CD4-positive, alpha-beta T cell (primary cell): ENCODE measurements at regions of chr10 and their contacts with region 1.

Region 1: DNA sequence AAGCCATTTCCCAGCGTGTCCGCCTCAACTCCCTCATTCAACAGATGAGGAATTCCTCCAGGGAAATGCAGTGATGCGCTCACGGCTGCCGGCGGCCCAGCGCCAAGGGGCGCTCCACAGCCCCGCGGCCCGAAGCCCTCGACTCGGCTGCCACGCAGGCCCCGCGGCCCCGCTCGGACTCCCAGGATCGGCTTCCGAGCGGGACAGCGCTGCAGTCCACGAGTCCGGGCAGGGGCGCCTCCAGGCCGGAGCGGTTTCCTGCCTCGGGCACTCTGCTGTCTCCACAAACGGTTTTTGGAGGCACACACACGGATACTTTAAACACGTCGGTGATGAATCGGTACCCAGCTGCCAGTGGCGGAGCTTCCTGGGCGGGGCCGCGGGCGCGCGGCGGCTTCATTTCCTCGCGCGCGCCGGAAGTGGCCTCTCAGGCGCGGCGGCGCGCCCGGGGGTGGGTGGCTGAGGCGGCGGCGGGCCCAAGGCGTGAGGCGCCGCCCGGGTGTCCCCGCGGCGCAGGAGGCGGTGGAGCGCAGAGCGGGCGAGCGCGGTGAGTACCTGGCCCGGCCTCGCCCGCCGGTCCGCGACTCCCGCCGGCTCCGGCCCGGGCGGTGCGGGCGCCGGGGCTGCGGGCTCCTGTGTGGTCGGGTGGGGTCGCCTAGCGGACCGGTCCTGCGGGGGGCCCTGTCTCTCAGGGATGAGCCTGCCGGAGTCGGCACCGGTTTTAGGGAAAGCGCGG is at the start of gene CSGALNACT2:
- DNase-seq: peak; percentile 75 to 95 (median 86)
- ATAC-seq: peak; percentile 66
- H3K4me3 ChIP-seq: peak within 1 kb of the TSS; percentile 95
- H3K4me3 Mint-ChIP-seq: peak within 1 kb of the TSS; percentile 96
- H3K27ac ChIP-seq: peak within 1 kb of the TSS; percentile 86 to 88
- H3K27ac Mint-ChIP-seq: peak within 1 kb of the TSS; percentile 96
- H3K4me1 ChIP-seq: peaks cover 34% of the 10 kb centered on the region
- H3K4me1 Mint-ChIP-seq: peaks cover 47% of the 10 kb centered on the region
- H3K27me3 ChIP-seq: no peaks in the 10 kb centered on the region
- H3K27me3 Mint-ChIP-seq: no peaks in the 10 kb centered on the region
- CTCF ChIP-seq: no peak
- total RNA-seq, gene CSGALNACT2: 59.4 to 60.9 TPM

Region 2: DNA sequence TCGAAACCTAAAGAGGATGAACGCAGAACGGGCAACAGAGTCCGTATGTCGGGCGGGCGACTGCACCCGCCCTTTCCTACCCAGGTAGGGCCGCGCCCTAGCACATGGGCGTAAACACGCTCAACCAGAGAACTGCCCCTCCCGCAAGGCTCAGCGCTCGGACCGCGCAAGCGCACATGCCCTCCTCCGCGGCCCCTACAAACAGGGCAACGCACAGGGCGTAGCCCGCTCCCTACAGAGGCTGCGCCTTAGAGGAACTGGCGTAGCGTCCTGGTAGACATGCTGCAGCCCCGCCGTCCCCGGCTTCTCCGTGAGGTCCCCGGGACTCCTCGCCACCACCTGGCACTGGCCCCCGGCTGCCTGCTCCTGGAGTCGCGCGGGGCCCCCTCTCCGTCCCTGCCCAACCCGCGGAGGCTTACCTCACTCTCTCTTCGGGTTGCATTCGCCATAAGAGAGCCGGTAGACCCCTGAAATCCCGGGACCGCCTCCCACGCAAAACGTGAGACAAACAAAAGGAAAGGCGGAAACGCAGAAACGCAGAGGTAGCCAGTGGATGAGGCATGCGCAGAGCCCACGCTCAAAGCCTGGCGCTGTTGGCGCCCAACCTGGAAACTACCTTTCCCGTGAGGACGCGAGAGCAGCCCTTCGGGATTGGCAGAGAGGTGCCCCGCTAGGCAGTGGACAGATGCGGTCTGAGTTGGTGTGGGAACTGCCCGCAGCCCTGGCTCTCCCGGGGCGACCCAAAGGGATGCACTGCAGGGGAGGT is 500.0 kb before region 1 on chr10 and contains the start of gene ZNF33B:
- CTCF ChIA-PET with region 1: no interaction called
- POLR2A ChIA-PET with region 1: interaction called, 8 read pairs
- intact Hi-C with region 1: loop called in 1 of 2 experiments (anchors 5 kb)
- DNase-seq: peak; percentile 89 to 97 (median 94)
- ATAC-seq: peak; percentile 91
- H3K4me3 ChIP-seq: peak within 1 kb of the TSS; percentile 71
- H3K4me3 Mint-ChIP-seq: peak within 1 kb of the TSS; percentile 96
- H3K27ac ChIP-seq: peak within 1 kb of the TSS; percentile 91 to 92
- H3K27ac Mint-ChIP-seq: peak within 1 kb of the TSS; percentile 97
- H3K4me1 ChIP-seq: peaks cover 18% of the 10 kb centered on the region
- H3K4me1 Mint-ChIP-seq: peaks cover 52% of the 10 kb centered on the region
- H3K27me3 ChIP-seq: no peaks in the 10 kb centered on the region
- H3K27me3 Mint-ChIP-seq: no peaks in the 10 kb centered on the region
- CTCF ChIP-seq: no peak
- total RNA-seq, gene ZNF33B: 26.6 to 27.0 TPM

Region 3: GRCh38 chr10:43024942-43025700 is 113.1 kb before region 1 on chr10:
- CTCF ChIA-PET with region 1: no interaction called
- POLR2A ChIA-PET with region 1: no interaction called
- intact Hi-C with region 1: no loop called
- DNase-seq: no peak
- ATAC-seq: no peak
- H3K4me3 ChIP-seq: no peak overlapping the region
- H3K4me3 Mint-ChIP-seq: no peak overlapping the region
- H3K27ac ChIP-seq: no peak overlapping the region
- H3K27ac Mint-ChIP-seq: no peak overlapping the region
- H3K4me1 ChIP-seq: no peaks in the 10 kb centered on the region
- H3K4me1 Mint-ChIP-seq: no peaks in the 10 kb centered on the region
- H3K27me3 ChIP-seq: peaks cover 0 to 5% of the 10 kb centered on the region in 2 experiments
- H3K27me3 Mint-ChIP-seq: peaks cover 20% of the 10 kb centered on the region
- CTCF ChIP-seq: no peak

Region 4: DNA sequence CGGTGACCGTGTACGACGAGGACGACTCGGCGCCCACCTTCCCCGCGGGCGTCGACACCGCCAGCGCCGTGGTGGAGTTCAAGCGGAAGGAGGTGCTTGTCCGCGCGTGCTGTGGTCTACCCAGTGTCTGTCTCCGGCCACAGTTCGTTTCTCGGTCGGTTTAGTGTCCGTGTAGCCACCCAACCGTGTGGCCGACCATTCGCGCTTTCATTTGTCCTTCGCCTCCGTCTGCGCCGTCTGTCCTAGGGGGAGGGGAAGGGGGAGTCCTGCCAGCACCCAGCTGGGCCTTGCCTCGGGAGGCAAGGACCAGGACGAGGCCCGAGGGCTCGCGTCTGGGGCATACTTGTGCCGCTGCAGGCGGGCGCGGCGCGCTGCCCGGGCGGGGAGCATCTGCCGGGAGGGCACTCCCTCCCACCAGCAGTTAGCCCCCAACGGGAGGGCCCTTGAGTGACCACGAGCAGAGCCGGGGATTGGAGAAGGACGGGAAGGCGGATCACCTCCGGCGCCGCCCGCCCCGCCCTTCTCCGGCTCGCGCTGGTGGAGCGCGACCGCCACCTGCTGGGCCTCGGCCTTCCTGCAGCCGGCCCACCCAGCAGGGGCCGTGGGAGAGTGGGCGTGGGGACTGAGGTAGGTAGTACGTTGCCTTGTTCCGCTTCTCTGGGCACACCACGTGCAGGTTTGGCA is 32.9 kb before region 1 on chr10:
- CTCF ChIA-PET with region 1: interaction called, 3 read pairs
- POLR2A ChIA-PET with region 1: interaction called, 5 read pairs
- intact Hi-C with region 1: loop called in 1 of 2 experiments (anchors 2 kb)
- DNase-seq: peak; percentile 49 to 87 (median 67)
- ATAC-seq: peak; percentile 98
- H3K4me3 ChIP-seq: peak overlapping the region; percentile 62
- H3K4me3 Mint-ChIP-seq: peak overlapping the region; percentile 76
- H3K27ac ChIP-seq: no peak overlapping the region
- H3K27ac Mint-ChIP-seq: no peak overlapping the region
- H3K4me1 ChIP-seq: peaks cover 23% of the 10 kb centered on the region
- H3K4me1 Mint-ChIP-seq: peaks cover 4% of the 10 kb centered on the region
- H3K27me3 ChIP-seq: peaks cover 18 to 25% of the 10 kb centered on the region in 2 experiments
- H3K27me3 Mint-ChIP-seq: peaks cover 28% of the 10 kb centered on the region
- CTCF ChIP-seq: peak; percentile 99

Region 5: GRCh38 chr10:43174969-43175368 is 36.8 kb after region 1 on chr10:
- CTCF ChIA-PET with region 1: interaction called, 4 read pairs
- POLR2A ChIA-PET with region 1: interaction called, 8 read pairs
- intact Hi-C with region 1: loop called in 1 of 2 experiments (anchors 5 kb)
- DNase-seq: no peak
- ATAC-seq: no peak
- H3K4me3 ChIP-seq: no peak overlapping the region
- H3K4me3 Mint-ChIP-seq: no peak overlapping the region
- H3K27ac ChIP-seq: no peak overlapping the region
- H3K27ac Mint-ChIP-seq: no peak overlapping the region
- H3K4me1 ChIP-seq: peaks cover 7% of the 10 kb centered on the region
- H3K4me1 Mint-ChIP-seq: peaks cover 14% of the 10 kb centered on the region
- H3K27me3 ChIP-seq: no peaks in the 10 kb centered on the region
- H3K27me3 Mint-ChIP-seq: no peaks in the 10 kb centered on the region
- CTCF ChIP-seq: no peak

Region 6: GRCh38 chr10:43461950-43462349 is 323.8 kb after region 1 on chr10:
- CTCF ChIA-PET with region 1: no interaction called
- POLR2A ChIA-PET with region 1: interaction called, 7 read pairs
- intact Hi-C with region 1: loop called in 1 of 2 experiments (anchors 5 kb)
- DNase-seq: peak in 5 of 14 experiments; percentile 12 to 89 (median 83)
- ATAC-seq: peak; percentile 87
- H3K4me3 ChIP-seq: no peak overlapping the region
- H3K4me3 Mint-ChIP-seq: no peak overlapping the region
- H3K27ac ChIP-seq: no peak overlapping the region
- H3K27ac Mint-ChIP-seq: peak overlapping the region; percentile 2
- H3K4me1 ChIP-seq: peaks cover 9% of the 10 kb centered on the region
- H3K4me1 Mint-ChIP-seq: peaks cover 20% of the 10 kb centered on the region
- H3K27me3 ChIP-seq: no peaks in the 10 kb centered on the region
- H3K27me3 Mint-ChIP-seq: no peaks in the 10 kb centered on the region
- CTCF ChIP-seq: peak; percentile 86

Region 7: GRCh38 chr10:44959247-44960087 is 1821.3 kb after region 1 on chr10 and contains the start of gene RASSF4:
- CTCF ChIA-PET with region 1: no interaction called
- POLR2A ChIA-PET with region 1: no interaction called
- intact Hi-C with region 1: loop called in 1 of 2 experiments (anchors 10 kb)
- DNase-seq: peak; percentile 83 to 96 (median 92)
- ATAC-seq: peak; percentile 100
- H3K4me3 ChIP-seq: peak within 1 kb of the TSS; percentile 81
- H3K4me3 Mint-ChIP-seq: peak within 1 kb of the TSS; percentile 93
- H3K27ac ChIP-seq: peak within 1 kb of the TSS in 1 of 2 donors; percentile 29
- H3K27ac Mint-ChIP-seq: peak within 1 kb of the TSS; percentile 79
- H3K4me1 ChIP-seq: peaks cover 26% of the 10 kb centered on the region
- H3K4me1 Mint-ChIP-seq: peaks cover 30% of the 10 kb centered on the region
- H3K27me3 ChIP-seq: no peaks in the 10 kb centered on the region
- H3K27me3 Mint-ChIP-seq: no peaks in the 10 kb centered on the region
- CTCF ChIP-seq: no peak
- total RNA-seq, gene RASSF4: 0.88 to 1.4 TPM